ENCODE measurements at regions of chr16 and their contacts with region 1.

Region 1: DNA sequence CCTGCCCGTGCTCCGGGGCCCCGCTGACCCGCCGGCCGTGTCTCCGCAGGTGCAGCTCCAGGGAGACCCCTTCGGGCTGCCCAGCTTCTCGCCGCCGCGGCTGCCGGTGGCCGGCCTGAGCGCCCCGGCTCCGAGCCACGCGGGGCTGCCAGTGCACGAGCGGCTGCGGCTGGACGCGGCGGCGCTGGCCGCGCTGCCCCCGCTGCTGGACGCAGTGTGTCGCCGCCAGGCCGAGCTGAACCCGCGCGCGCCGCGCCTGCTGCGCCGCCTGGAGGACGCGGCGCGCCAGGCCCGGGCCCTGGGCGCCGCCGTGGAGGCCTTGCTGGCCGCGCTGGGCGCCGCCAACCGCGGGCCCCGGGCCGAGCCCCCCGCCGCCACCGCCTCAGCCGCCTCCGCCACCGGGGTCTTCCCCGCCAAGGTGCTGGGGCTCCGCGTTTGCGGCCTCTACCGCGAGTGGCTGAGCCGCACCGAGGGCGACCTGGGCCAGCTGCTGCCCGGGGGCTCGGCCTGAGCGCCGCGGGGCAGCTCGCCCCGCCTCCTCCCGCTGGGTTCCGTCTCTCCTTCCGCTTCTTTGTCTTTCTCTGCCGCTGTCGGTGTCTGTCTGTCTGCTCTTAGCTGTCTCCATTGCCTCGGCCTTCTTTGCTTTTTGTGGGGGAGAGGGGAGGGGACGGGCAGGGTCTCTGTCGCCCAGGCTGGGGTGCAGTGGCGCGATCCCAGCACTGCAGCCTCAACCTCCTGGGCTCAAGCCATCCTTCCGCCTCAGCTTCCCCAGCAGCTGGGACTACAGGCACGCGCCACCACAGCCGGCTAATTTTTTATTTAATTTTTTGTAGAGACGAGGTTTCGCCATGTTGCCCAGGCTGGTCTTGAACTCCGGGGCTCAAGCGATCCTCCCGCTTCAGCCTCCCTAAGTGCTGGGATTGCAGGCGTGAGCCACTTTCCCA is 5.9 kb downstream of the CTF1 start:
- DNase-seq: peak; percentile 57
- H3K4me3 Mint-ChIP-seq: peak overlapping the region; percentile 75
- H3K27ac Mint-ChIP-seq: peak overlapping the region; percentile 55
- H3K4me1 Mint-ChIP-seq: peaks cover under 1% of the 10 kb centered on the region
- H3K27me3 Mint-ChIP-seq: no peaks in the 10 kb centered on the region
- CTCF ChIP-seq: no peak

Region 2: GRCh38 chr16:30853758-30854157 is 48.5 kb before region 1 on chr16:
- CTCF ChIA-PET with region 1: interaction called, 22 read pairs
- POLR2A ChIA-PET with region 1: interaction called, 4 read pairs
- intact Hi-C with region 1: no loop called
- DNase-seq: no peak
- H3K4me3 Mint-ChIP-seq: no peak overlapping the region
- H3K27ac Mint-ChIP-seq: no peak overlapping the region
- H3K4me1 Mint-ChIP-seq: peaks cover 8% of the 10 kb centered on the region
- H3K27me3 Mint-ChIP-seq: no peaks in the 10 kb centered on the region
- CTCF ChIP-seq: no peak

Region 3: GRCh38 chr16:30912794-30913412 is 10.6 kb after region 1 on chr16:
- CTCF ChIA-PET with region 1: interaction called, 13 read pairs
- POLR2A ChIA-PET with region 1: interaction called, 7 read pairs
- intact Hi-C with region 1: no loop called
- DNase-seq: no peak
- H3K4me3 Mint-ChIP-seq: no peak overlapping the region
- H3K27ac Mint-ChIP-seq: no peak overlapping the region
- H3K4me1 Mint-ChIP-seq: no peaks in the 10 kb centered on the region
- H3K27me3 Mint-ChIP-seq: no peaks in the 10 kb centered on the region
- CTCF ChIP-seq: no peak

Region 4: GRCh38 chr16:30922960-30923535 is 20.7 kb after region 1 on chr16:
- CTCF ChIA-PET with region 1: interaction called, 18 read pairs
- POLR2A ChIA-PET with region 1: interaction called, 5 read pairs
- intact Hi-C with region 1: no loop called
- DNase-seq: peak; percentile 100
- H3K4me3 Mint-ChIP-seq: peak overlapping the region; percentile 98
- H3K27ac Mint-ChIP-seq: peak overlapping the region; percentile 100
- H3K4me1 Mint-ChIP-seq: peaks cover 14% of the 10 kb centered on the region
- H3K27me3 Mint-ChIP-seq: no peaks in the 10 kb centered on the region
- CTCF ChIP-seq: no peak

Region 5: DNA sequence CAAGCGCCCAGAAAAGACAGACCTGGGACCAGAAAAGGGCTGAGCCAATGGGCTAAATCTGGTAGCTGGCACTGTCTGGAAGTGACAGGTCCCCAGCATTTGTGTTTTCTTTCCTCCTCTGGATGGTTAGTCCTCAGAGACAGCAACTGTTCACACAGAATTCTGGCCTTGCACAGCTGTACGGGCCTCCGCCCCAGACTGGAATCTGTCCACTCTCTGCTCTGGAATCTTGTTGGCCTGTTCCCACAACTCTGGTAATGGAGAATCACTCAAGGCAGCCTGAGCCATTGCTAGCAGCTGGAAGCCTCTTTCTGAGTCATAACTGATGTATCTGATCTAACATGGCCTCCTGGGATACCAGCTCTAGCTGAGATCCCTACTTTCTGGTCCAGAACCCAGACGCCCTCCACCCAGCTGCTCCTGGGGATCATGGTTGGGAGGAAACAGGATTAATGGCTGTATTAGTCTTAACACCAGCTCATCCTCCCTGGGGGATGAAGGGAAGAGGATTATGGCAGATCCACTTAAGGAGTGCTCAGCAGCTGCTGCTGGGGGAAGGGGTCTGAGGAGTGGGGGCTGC is 162.7 kb after region 1 on chr16:
- CTCF ChIA-PET with region 1: no interaction called
- POLR2A ChIA-PET with region 1: no interaction called
- intact Hi-C with region 1: no loop called
- DNase-seq: peak; percentile 51
- H3K4me3 Mint-ChIP-seq: peak overlapping the region; percentile 38
- H3K27ac Mint-ChIP-seq: peak overlapping the region; percentile 94
- H3K4me1 Mint-ChIP-seq: peaks cover 22% of the 10 kb centered on the region
- H3K27me3 Mint-ChIP-seq: no peaks in the 10 kb centered on the region
- CTCF ChIP-seq: no peak

Region 6: GRCh38 chr16:31079342-31079903 is 177.1 kb after region 1 on chr16:
- CTCF ChIA-PET with region 1: no interaction called
- POLR2A ChIA-PET with region 1: no interaction called
- intact Hi-C with region 1: no loop called
- DNase-seq: no peak
- H3K4me3 Mint-ChIP-seq: no peak overlapping the region
- H3K27ac Mint-ChIP-seq: no peak overlapping the region
- H3K4me1 Mint-ChIP-seq: peaks cover 14% of the 10 kb centered on the region
- H3K27me3 Mint-ChIP-seq: no peaks in the 10 kb centered on the region
- CTCF ChIP-seq: no peak

Region 7: DNA sequence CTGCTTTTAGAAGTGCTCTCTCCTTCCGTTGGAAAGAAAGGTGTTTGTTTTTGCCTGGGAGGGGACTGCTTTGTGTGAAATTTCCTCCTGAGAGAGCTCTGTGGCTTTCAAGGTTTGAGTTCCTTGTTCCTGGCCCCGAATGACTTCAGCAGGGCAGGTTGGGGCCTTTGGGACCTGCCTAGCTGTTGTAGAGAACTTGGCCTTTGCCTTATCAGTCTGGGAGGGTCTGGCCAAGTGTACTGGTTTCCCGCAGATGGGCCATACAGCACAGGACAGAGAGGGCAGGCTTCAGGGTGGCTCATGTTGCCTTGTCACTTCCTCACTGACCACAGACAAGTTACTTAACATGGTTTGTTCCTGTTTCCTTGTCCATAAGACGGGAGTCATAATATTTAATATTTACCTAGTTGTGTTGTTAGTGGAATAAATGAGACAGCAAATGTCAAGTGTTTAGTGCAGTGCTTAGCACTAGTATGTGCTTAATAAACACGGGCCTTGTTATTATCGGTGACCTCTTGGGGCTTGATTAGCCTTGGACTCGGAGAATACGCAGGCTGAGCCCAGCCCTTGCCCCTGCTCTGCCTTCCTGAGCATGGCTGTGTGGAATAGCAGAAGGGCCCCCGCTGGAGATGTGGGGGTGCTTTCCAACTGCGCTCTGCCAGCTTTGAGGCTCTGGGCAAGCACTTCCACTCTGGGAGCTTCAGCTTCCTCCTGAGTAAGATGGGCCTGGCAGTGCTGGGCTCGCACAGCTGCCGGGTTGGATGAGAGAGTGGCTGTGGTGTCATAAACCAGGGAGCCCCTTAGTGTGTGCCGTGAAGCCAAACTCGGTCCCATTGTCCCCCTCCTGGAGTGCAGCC is 226.6 kb after region 1 on chr16:
- CTCF ChIA-PET with region 1: no interaction called
- POLR2A ChIA-PET with region 1: no interaction called
- intact Hi-C with region 1: no loop called
- DNase-seq: no peak
- H3K4me3 Mint-ChIP-seq: no peak overlapping the region
- H3K27ac Mint-ChIP-seq: no peak overlapping the region
- H3K4me1 Mint-ChIP-seq: peaks cover 8% of the 10 kb centered on the region
- H3K27me3 Mint-ChIP-seq: no peaks in the 10 kb centered on the region
- CTCF ChIP-seq: no peak